ENCODE measurements at regions of chr17 and their contacts with region 1.

Region 1: GRCh38 chr17:50361561-50362480 is 11.2 kb downstream of the MRPL27 start:
- DNase-seq: peak; percentile 44 to 85
- ATAC-seq: peak; percentile 85 to 98 (median 91)
- H3K4me3 ChIP-seq: no peak overlapping the region
- H3K4me3 Mint-ChIP-seq: no peak overlapping the region
- H3K27ac ChIP-seq: no peak overlapping the region
- H3K27ac Mint-ChIP-seq: peak overlapping the region; percentile 42 to 77
- H3K4me1 ChIP-seq: peaks cover 7% of the 10 kb centered on the region
- H3K4me1 Mint-ChIP-seq: peaks cover 7 to 18% of the 10 kb centered on the region in 2 donors
- H3K27me3 ChIP-seq: no peaks in the 10 kb centered on the region
- H3K27me3 Mint-ChIP-seq: no peaks in the 10 kb centered on the region
- CTCF ChIP-seq: peak; percentile 66

Region 2: GRCh38 chr17:50397111-50397918 is 35.5 kb after region 1 on chr17 and contains the start of gene LRRC59:
- intact Hi-C with region 1: loop called (anchors 5 kb)
- DNase-seq: peak; percentile 96
- ATAC-seq: peak; percentile 98 to 100 (median 99)
- H3K4me3 ChIP-seq: peak within 1 kb of the TSS; percentile 67
- H3K4me3 Mint-ChIP-seq: peak within 1 kb of the TSS; percentile 92
- H3K27ac ChIP-seq: peak within 1 kb of the TSS; percentile 64
- H3K27ac Mint-ChIP-seq: peak within 1 kb of the TSS; percentile 59 to 79
- H3K4me1 ChIP-seq: peaks cover 22% of the 10 kb centered on the region
- H3K4me1 Mint-ChIP-seq: peaks cover 29 to 42% of the 10 kb centered on the region in 2 donors
- H3K27me3 ChIP-seq: no peaks in the 10 kb centered on the region
- H3K27me3 Mint-ChIP-seq: no peaks in the 10 kb centered on the region
- CTCF ChIP-seq: peak; percentile 93
- total RNA-seq, gene LRRC59: 55.6 to 62.7 (median 56.0) TPM

Region 3: GRCh38 chr17:50487213-50488096 is 125.6 kb after region 1 on chr17:
- intact Hi-C with region 1: no loop called
- DNase-seq: no peak
- ATAC-seq: no peak
- H3K4me3 ChIP-seq: no peak overlapping the region
- H3K4me3 Mint-ChIP-seq: no peak overlapping the region
- H3K27ac ChIP-seq: no peak overlapping the region
- H3K27ac Mint-ChIP-seq: no peak overlapping the region
- H3K4me1 ChIP-seq: no peaks in the 10 kb centered on the region
- H3K4me1 Mint-ChIP-seq: peaks cover 5% of the 10 kb centered on the region in 2 donors
- H3K27me3 ChIP-seq: no peaks in the 10 kb centered on the region
- H3K27me3 Mint-ChIP-seq: no peaks in the 10 kb centered on the region
- CTCF ChIP-seq: no peak